Panc1 (cell line): ENCODE measurements at regions of chr2 and their contacts with region 1.

Region 1: GRCh38 chr2:51697095-51697494 is 665.2 kb upstream of the NRXN1 start:
- DNase-seq: no peak
- ATAC-seq: no peak
- H3K4me3 ChIP-seq: no peak overlapping the region
- H3K27ac ChIP-seq: no peak overlapping the region
- H3K4me1 ChIP-seq: no peaks in the 10 kb centered on the region
- H3K27me3 ChIP-seq: no peaks in the 10 kb centered on the region
- CTCF ChIP-seq: no peak

Region 2: GRCh38 chr2:51899643-51900042 is 202.5 kb after region 1 on chr2:
- CTCF ChIA-PET with region 1: no interaction called
- POLR2A ChIA-PET with region 1: no interaction called
- in situ Hi-C with region 1: no loop called
- intact Hi-C with region 1: no loop called
- DNase-seq: no peak
- ATAC-seq: no peak
- H3K4me3 ChIP-seq: no peak overlapping the region
- H3K27ac ChIP-seq: no peak overlapping the region
- H3K4me1 ChIP-seq: no peaks in the 10 kb centered on the region
- H3K27me3 ChIP-seq: no peaks in the 10 kb centered on the region
- CTCF ChIP-seq: no peak

Region 3: GRCh38 chr2:53490659-53491058 is 1793.6 kb after region 1 on chr2:
- CTCF ChIA-PET with region 1: no interaction called
- POLR2A ChIA-PET with region 1: interaction called, 10 read pairs
- in situ Hi-C with region 1: no loop called
- intact Hi-C with region 1: no loop called
- DNase-seq: no peak
- ATAC-seq: no peak
- H3K4me3 ChIP-seq: no peak overlapping the region
- H3K27ac ChIP-seq: no peak overlapping the region
- H3K4me1 ChIP-seq: no peaks in the 10 kb centered on the region
- H3K27me3 ChIP-seq: no peaks in the 10 kb centered on the region
- CTCF ChIP-seq: no peak